ENCODE measurements at regions of chr11 and their contacts with region 1.

Region 1: DNA sequence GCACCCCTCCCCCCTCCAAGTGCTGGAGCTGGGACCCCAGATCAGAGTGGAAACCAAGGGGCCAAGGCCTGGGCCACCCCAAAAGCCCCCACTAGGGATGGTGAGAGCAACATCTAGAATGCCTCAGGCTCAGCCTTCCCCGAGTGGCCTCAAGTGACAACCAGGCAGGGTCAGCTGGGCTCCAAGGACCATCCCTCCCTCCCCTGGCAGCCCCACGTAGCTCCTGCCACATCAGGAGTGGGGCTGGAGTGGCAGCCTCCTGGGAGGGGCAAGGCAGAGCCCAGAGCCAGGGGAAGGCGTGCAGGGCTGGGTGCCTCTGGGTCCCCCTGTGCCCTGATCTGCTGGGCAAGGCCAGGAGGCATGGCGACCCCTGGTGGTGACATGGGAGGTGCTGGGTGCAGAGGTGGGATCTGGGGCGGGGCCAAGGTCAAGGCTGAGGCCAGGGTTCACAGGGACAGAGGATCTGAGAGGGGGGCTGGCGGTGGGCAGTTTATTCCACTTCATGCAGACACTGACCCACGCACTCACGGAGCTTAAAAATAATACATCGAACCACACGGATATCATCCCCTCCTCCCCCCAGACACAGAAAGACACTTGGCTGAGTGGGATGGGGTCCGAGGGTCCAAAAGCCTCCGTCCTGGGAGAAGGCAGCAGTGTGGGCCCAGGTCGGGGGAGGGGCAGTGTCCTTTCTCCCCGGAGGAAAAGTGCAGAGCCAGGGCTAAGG is 15.8 kb upstream of the EHD1 start:
- DNase-seq: peak; percentile 76
- ATAC-seq: peak; percentile 76
- H3K4me3 ChIP-seq: peak overlapping the region; percentile 80 to 96 (median 95); a peak in 5 of 6 replicates
- H3K27ac ChIP-seq: peak overlapping the region; percentile 88
- H3K4me1 ChIP-seq: peaks cover 47% of the 10 kb centered on the region
- H3K27me3 ChIP-seq: no peaks in the 10 kb centered on the region; a peak in 1 of 5 replicates
- CTCF ChIP-seq: peak; percentile 99
- EP300 ChIP-seq: peak in 1 of 2 experiments; percentile 55; a peak in 2 of 4 replicates
- POLR2A ChIP-seq: no peak
- RAD21 ChIP-seq: peak; percentile 94

Region 2: DNA sequence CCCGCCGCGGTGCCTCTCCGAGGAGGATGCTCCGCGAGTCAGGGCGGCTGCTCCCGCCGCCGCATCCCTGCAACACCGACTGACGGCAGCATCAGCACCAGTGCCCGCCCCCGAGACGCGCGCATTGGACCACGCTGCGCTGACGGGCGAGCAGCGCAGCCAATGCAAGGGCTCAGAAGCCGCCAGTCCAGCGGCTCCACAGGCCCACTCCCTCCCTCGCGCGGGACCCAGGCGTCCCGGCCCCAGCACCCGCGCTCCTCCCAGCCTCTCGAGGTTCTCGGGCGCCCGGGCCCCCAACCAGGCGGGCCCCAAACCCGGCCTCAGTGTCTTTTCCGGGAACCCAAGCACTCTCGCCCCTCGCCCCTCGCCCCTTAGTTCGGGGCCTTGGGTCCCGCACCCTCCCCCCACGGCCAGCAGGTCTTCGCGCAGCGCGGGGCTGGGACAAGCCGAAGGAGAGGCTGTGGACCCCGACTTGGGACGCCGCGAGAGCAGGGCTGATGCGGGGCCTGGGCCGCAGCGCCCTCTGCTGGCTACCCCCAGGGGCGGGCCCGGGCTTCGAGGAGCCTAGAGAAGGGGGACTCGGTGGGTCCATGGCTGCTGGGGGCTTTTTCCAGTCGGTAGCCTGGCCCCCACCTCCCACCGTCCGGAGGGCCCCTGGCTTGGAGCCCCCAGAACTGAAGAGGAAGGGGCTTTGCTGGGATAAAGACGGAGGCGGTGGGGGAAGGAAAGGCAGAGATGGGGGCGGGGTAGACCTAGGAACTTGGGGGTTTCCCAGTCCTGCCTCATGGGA is 170.9 kb before region 1 on chr11 and contains the start of gene NRXN2:
- CTCF ChIA-PET with region 1: no interaction called
- POLR2A ChIA-PET with region 1: no interaction called
- in situ Hi-C with region 1: no loop called
- intact Hi-C with region 1: no loop called
- DNase-seq: peak; percentile 34
- ATAC-seq: peak; percentile 81
- H3K4me3 ChIP-seq: peak within 1 kb of the TSS; percentile 50 to 68 (median 51); a peak in 5 of 6 replicates
- H3K27ac ChIP-seq: no peak within 1 kb of the TSS
- H3K4me1 ChIP-seq: peaks cover 34% of the 10 kb centered on the region
- H3K27me3 ChIP-seq: peaks cover 3 to 39% of the 10 kb centered on the region in 2 experiments
- CTCF ChIP-seq: peak; percentile 83
- EP300 ChIP-seq: no peak
- POLR2A ChIP-seq: no peak
- RAD21 ChIP-seq: peak; percentile 41; the same call in 1 of the 2 replicates
- total RNA-seq, gene NRXN2: not detected in 2 replicates

Region 3: GRCh38 chr11:64787526-64788320 is 106.5 kb before region 1 on chr11:
- CTCF ChIA-PET with region 1: no interaction called
- POLR2A ChIA-PET with region 1: no interaction called
- in situ Hi-C with region 1: loop called (anchors 5 kb)
- intact Hi-C with region 1: no loop called
- DNase-seq: peak; percentile 41
- ATAC-seq: peak; percentile 88
- H3K4me3 ChIP-seq: no peak overlapping the region
- H3K27ac ChIP-seq: no peak overlapping the region
- H3K4me1 ChIP-seq: no peaks in the 10 kb centered on the region
- H3K27me3 ChIP-seq: no peaks in the 10 kb centered on the region
- CTCF ChIP-seq: peak; percentile 92
- EP300 ChIP-seq: no peak
- POLR2A ChIP-seq: no peak
- RAD21 ChIP-seq: peak; percentile 78

Region 4: GRCh38 chr11:64868904-64869570 is 25.2 kb before region 1 on chr11:
- CTCF ChIA-PET with region 1: interaction called, 5 read pairs
- POLR2A ChIA-PET with region 1: interaction called, 132 read pairs
- in situ Hi-C with region 1: no loop called
- intact Hi-C with region 1: loop called (anchors 1 kb)
- DNase-seq: no peak
- ATAC-seq: no peak
- H3K4me3 ChIP-seq: no peak overlapping the region
- H3K27ac ChIP-seq: no peak overlapping the region
- H3K4me1 ChIP-seq: peaks cover 57% of the 10 kb centered on the region
- H3K27me3 ChIP-seq: no peaks in the 10 kb centered on the region
- CTCF ChIP-seq: no peak
- EP300 ChIP-seq: no peak
- POLR2A ChIP-seq: no peak
- RAD21 ChIP-seq: no peak